K562 (cell line): ENCODE measurements at regions of chr16 and their contacts with region 1.

Region 1: GRCh38 chr16:2422123-2422867 is 7.0 kb upstream of the CCNF start:
- DNase-seq: no peak
- ATAC-seq: no peak; the same call in 2 of the 3 replicates
- H3K4me3 ChIP-seq: no peak overlapping the region
- H3K27ac ChIP-seq: no peak overlapping the region
- H3K4me1 ChIP-seq: peaks cover 9 to 11% of the 10 kb centered on the region in 2 experiments; a peak in 4 of 5 replicates
- H3K27me3 ChIP-seq: no peaks in the 10 kb centered on the region
- CTCF ChIP-seq: no peak
- EP300 ChIP-seq: no peak
- POLR2A ChIP-seq: no peak
- RAD21 ChIP-seq: no peak

Region 2: DNA sequence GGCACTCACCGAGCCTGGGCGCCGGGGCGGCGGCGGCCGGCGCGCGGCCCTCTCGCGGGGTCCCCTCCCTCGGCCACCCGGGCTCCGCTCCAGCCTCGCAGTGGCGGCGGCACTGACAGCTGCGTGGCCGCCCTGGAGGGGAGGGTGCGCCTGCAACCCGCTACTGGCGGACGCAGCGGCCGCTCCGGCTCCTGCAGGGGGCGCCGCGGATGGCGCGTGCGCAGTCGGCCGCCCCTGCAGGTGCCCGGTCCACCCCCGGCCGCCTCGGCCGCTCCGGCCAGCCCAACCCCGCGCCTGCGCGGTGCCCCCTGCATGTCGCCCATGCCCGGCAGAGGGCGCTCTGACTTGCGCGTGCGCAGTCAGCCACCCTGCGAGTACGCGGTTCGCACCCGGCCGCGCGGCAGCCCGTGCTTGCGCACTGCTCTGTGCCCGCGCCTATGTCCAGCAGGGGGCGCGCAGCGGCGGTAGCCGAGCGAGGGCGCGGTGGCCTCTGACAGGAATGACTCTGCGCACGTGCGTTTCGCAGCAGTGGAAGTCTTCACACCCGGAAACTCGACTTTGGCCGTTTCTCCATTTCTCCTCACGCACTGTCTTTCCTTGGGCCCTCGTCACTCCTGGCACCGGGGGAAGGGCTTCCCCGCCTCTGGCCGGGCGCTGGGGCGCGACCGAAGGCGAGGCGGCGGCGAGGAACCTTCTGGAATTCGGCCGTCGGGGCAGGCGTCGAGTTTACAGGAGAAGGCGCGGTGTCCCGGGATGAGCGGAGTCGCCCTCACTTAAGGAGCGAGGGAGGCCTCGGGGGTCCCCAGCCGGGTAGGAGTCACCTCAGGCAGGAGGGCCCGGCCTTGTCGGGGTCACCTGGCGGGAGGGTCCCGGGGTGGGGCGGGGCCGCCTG is 81.5 kb before region 1 on chr16 and contains the start of gene ABCA3:
- CTCF ChIA-PET with region 1: interaction called, 12 read pairs
- POLR2A ChIA-PET with region 1: interaction called, 3 read pairs
- in situ Hi-C with region 1: no loop called
- intact Hi-C with region 1: loop called (anchors 1 kb)
- DNase-seq: peak; percentile 98 to 99 (median 99)
- ATAC-seq: peak; percentile 90
- H3K4me3 ChIP-seq: peak within 1 kb of the TSS; percentile 96
- H3K27ac ChIP-seq: peak within 1 kb of the TSS; percentile 88
- H3K4me1 ChIP-seq: peaks cover 23 to 43% of the 10 kb centered on the region in 2 experiments
- H3K27me3 ChIP-seq: no peaks in the 10 kb centered on the region
- CTCF ChIP-seq: peak; percentile 98 to 100 (median 99)
- EP300 ChIP-seq: peak; percentile 36; the same call in 1 of the 2 replicates
- POLR2A ChIP-seq: no peak
- RAD21 ChIP-seq: peak; percentile 86 to 89
- polyA plus RNA-seq, gene ABCA3: 0.66 to 0.81 TPM